Dendritic cell treated with granulocyte-macrophage colony-stimulating factor and Interleukin-4, amounts not matched to agents 40 ng/mL and 50 ng/mL, for 4 days (primary cell): ENCODE measurements at regions of chr6 and their contacts with region 1.

Region 1: DNA sequence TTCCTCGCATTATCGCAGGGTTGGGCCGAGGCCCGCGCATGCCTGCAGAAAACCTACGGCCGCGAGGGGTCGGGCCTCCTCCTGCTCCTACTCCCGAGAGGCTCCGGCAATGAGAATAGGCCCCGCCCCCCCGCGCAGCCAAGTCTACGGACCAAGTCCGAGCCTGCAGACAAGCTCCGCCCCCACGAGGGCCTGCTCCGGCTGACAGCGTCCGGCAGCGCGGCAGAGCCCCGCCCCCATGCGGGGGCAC is 3.1 kb upstream of the GPSM3 start:
- H3K4me3 Mint-ChIP-seq: peak overlapping the region; percentile 94
- H3K27ac Mint-ChIP-seq: peak overlapping the region; percentile 99
- H3K4me1 Mint-ChIP-seq: peaks cover 64% of the 10 kb centered on the region
- H3K27me3 Mint-ChIP-seq: peaks cover 5% of the 10 kb centered on the region

Region 2: GRCh38 chr6:32118782-32119628 is 76.6 kb before region 1 on chr6:
- intact Hi-C with region 1: loop called (anchors 2 kb)
- H3K4me3 Mint-ChIP-seq: no peak overlapping the region
- H3K27ac Mint-ChIP-seq: peak overlapping the region; percentile 14
- H3K4me1 Mint-ChIP-seq: peaks cover 76% of the 10 kb centered on the region
- H3K27me3 Mint-ChIP-seq: no peaks in the 10 kb centered on the region